PC-3 (cell line): ENCODE measurements at regions of chr10 and their contacts with region 1.

Region 1: GRCh38 chr10:69914398-69915214 is 112.9 kb downstream of the COL13A1 start:
- DNase-seq: peak; percentile 89
- ATAC-seq: peak; percentile 76
- H3K4me3 ChIP-seq: no peak overlapping the region
- H3K27ac ChIP-seq: no peak overlapping the region
- H3K4me1 ChIP-seq: no peaks in the 10 kb centered on the region
- H3K27me3 ChIP-seq: no peaks in the 10 kb centered on the region
- CTCF ChIP-seq: peak; percentile 100

Region 2: GRCh38 chr10:69644658-69645295 is 269.8 kb before region 1 on chr10:
- CTCF ChIA-PET with region 1: no interaction called
- POLR2A ChIA-PET with region 1: no interaction called
- intact Hi-C with region 1: loop called (anchors 1 kb)
- DNase-seq: peak; percentile 89
- ATAC-seq: peak; percentile 68
- H3K4me3 ChIP-seq: no peak overlapping the region
- H3K27ac ChIP-seq: no peak overlapping the region
- H3K4me1 ChIP-seq: peaks cover 10% of the 10 kb centered on the region
- H3K27me3 ChIP-seq: no peaks in the 10 kb centered on the region
- CTCF ChIP-seq: peak; percentile 100

Region 3: GRCh38 chr10:69696073-69696731 is 218.4 kb before region 1 on chr10:
- CTCF ChIA-PET with region 1: interaction called, 4 read pairs
- POLR2A ChIA-PET with region 1: no interaction called
- intact Hi-C with region 1: loop called (anchors 1 kb)
- DNase-seq: peak; percentile 98
- ATAC-seq: peak; percentile 94
- H3K4me3 ChIP-seq: no peak overlapping the region
- H3K27ac ChIP-seq: peak overlapping the region; percentile 17
- H3K4me1 ChIP-seq: peaks cover 7% of the 10 kb centered on the region
- H3K27me3 ChIP-seq: peaks cover 17% of the 10 kb centered on the region; the same call in 1 of the 2 replicates
- CTCF ChIP-seq: peak; percentile 98

Region 4: GRCh38 chr10:69786791-69787190 is 127.8 kb before region 1 on chr10:
- CTCF ChIA-PET with region 1: interaction called, 36 read pairs
- POLR2A ChIA-PET with region 1: no interaction called
- intact Hi-C with region 1: loop called (anchors 1 kb)
- DNase-seq: peak; percentile 82
- ATAC-seq: peak; percentile 92
- H3K4me3 ChIP-seq: no peak overlapping the region
- H3K27ac ChIP-seq: no peak overlapping the region
- H3K4me1 ChIP-seq: no peaks in the 10 kb centered on the region
- H3K27me3 ChIP-seq: peaks cover 27% of the 10 kb centered on the region
- CTCF ChIP-seq: peak; percentile 83

Region 5: GRCh38 chr10:69839696-69840345 is 74.8 kb before region 1 on chr10:
- CTCF ChIA-PET with region 1: interaction called, 6 read pairs
- POLR2A ChIA-PET with region 1: no interaction called
- intact Hi-C with region 1: loop called (anchors 5 kb)
- DNase-seq: peak; percentile 97
- ATAC-seq: peak; percentile 88
- H3K4me3 ChIP-seq: peak overlapping the region; percentile 9; the same call in 1 of the 2 replicates
- H3K27ac ChIP-seq: peak overlapping the region; percentile 14
- H3K4me1 ChIP-seq: peaks cover 36% of the 10 kb centered on the region
- H3K27me3 ChIP-seq: no peaks in the 10 kb centered on the region
- CTCF ChIP-seq: no peak

Region 6: DNA sequence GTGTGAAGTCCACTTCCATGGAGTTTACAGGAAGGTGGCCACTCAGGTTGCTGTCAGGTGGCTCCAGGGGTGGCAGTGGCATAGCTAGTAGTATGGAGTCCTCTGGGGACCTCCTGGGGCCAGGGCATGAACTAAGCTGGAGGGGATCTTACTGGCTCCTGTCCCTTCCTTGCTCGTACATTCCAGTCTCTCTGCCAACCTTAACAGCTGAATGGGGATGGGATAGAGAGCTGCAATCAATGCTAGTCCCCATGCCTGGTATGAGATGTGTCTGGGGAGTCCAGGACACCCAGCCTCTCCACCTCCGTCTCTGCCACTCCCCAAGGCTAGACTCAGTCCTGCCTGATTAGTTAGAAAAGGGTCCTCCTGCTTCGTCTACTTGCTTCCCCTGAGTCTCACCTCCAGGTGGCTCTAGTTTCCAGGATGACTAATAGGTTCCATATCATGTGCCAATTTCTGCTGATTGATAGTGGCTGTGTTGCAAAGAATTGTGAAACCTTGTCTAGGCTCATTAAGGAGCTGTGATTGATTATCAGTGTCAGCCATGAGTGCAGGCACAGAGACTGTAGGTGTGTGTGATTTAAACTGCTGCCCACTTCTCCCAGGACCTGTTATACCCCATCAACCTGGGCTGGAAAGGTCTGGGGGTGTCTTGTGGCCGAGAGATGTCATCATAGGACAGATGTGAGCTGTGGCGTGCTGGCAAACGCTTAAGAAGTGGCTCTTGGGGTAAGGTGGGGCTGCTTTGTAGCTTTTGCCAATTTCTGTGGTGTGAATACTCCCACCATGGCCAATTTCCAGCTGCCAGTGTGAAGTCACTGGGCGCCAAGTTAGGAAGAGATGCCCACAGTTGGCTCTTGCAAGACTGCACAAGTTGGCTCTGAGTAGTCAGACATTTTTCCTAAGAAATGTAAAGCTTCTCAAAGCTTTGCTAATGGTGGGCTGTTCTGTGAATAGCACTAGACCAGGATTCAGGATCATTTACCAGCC is 53.1 kb before region 1 on chr10:
- CTCF ChIA-PET with region 1: interaction called, 3 read pairs
- POLR2A ChIA-PET with region 1: no interaction called
- intact Hi-C with region 1: loop called (anchors 1 kb)
- DNase-seq: peak; percentile 99
- ATAC-seq: peak; percentile 38
- H3K4me3 ChIP-seq: no peak overlapping the region
- H3K27ac ChIP-seq: peak overlapping the region; percentile 95
- H3K4me1 ChIP-seq: peaks cover 63% of the 10 kb centered on the region
- H3K27me3 ChIP-seq: no peaks in the 10 kb centered on the region
- CTCF ChIP-seq: peak; percentile 92

Region 7: GRCh38 chr10:70500812-70501301 is 586.3 kb after region 1 on chr10:
- CTCF ChIA-PET with region 1: no interaction called
- POLR2A ChIA-PET with region 1: no interaction called
- intact Hi-C with region 1: no loop called
- DNase-seq: no peak
- ATAC-seq: no peak
- H3K4me3 ChIP-seq: no peak overlapping the region
- H3K27ac ChIP-seq: no peak overlapping the region
- H3K4me1 ChIP-seq: no peaks in the 10 kb centered on the region
- H3K27me3 ChIP-seq: 0 out of 2 replicates have a peak, but pooled peaks cover 6% of the 10 kb centered on the region
- CTCF ChIP-seq: no peak